ENCODE measurements at regions of chr4 and their contacts with region 1.

Region 1: DNA sequence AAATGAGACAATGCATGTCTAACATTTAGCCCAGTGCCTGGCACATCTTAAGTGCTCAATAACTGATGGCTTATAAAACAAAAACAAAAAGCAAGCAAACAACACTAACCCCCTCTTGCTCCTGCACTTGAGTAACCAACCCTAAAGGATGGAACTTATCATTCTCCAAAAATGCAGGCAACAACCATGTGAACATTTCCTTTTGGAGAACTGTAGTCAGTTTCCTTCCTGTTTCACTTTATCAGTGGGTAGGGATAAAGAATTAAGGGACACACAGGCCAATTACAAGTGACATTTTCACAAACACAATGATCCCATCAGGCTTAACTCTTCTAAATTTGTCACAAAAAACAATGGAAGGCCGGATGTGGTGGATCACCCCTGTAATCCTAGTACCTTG is 30.4 kb downstream of the RPS3A start:
- DNase-seq: no peak
- H3K4me3 ChIP-seq: no peak overlapping the region
- H3K27ac ChIP-seq: no peak overlapping the region
- H3K4me1 ChIP-seq: no peaks in the 10 kb centered on the region
- H3K27me3 ChIP-seq: no peaks in the 10 kb centered on the region
- CTCF ChIP-seq: no peak
- EP300 ChIP-seq: no peak
- POLR2A ChIP-seq: no peak
- RAD21 ChIP-seq: no peak

Region 2: GRCh38 chr4:151117371-151117962 is 12.3 kb before region 1 on chr4:
- CTCF ChIA-PET with region 1: interaction called, 15 read pairs
- POLR2A ChIA-PET with region 1: interaction called, 4 read pairs
- DNase-seq: peak in 1 of 2 experiments; percentile 78
- H3K4me3 ChIP-seq: no peak overlapping the region
- H3K27ac ChIP-seq: no peak overlapping the region
- H3K4me1 ChIP-seq: no peaks in the 10 kb centered on the region
- H3K27me3 ChIP-seq: no peaks in the 10 kb centered on the region
- CTCF ChIP-seq: peak in 2 of 3 experiments; percentile 56 to 67; a peak in 2 of 4 replicates
- EP300 ChIP-seq: no peak
- POLR2A ChIP-seq: no peak
- RAD21 ChIP-seq: peak; percentile 87 to 88

Region 3: GRCh38 chr4:151251603-151252304 is 122.0 kb after region 1 on chr4:
- CTCF ChIA-PET with region 1: no interaction called
- POLR2A ChIA-PET with region 1: no interaction called
- DNase-seq: no peak
- H3K4me3 ChIP-seq: no peak overlapping the region
- H3K27ac ChIP-seq: no peak overlapping the region
- H3K4me1 ChIP-seq: peaks cover 0 to 11% (median 4%) of the 10 kb centered on the region in 4 experiments; a peak in 2 of 7 replicates
- H3K27me3 ChIP-seq: no peaks in the 10 kb centered on the region; a peak in 1 of 7 replicates
- CTCF ChIP-seq: no peak
- EP300 ChIP-seq: no peak
- POLR2A ChIP-seq: no peak
- RAD21 ChIP-seq: no peak

Measured in H1 (cell line).